ENCODE measurements at regions of chr10 and their contacts with region 1.

Region 1: GRCh38 chr10:110746254-110746826 is 102.2 kb downstream of the RBM20 start:
- DNase-seq: peak; percentile 70
- ATAC-seq: peak; percentile 68
- H3K4me3 ChIP-seq: no peak overlapping the region
- H3K4me3 Mint-ChIP-seq: no peak overlapping the region
- H3K27ac ChIP-seq: no peak overlapping the region
- H3K27ac Mint-ChIP-seq: no peak overlapping the region
- H3K4me1 ChIP-seq: peaks cover 0 to 6% of the 10 kb centered on the region in 2 donors
- H3K4me1 Mint-ChIP-seq: peaks cover 3% of the 10 kb centered on the region
- H3K27me3 ChIP-seq: peaks cover 0 to 5% (median 0%) of the 10 kb centered on the region in 4 experiments
- H3K27me3 Mint-ChIP-seq: peaks cover 5% of the 10 kb centered on the region
- CTCF ChIP-seq: peak; percentile 96

Region 2: DNA sequence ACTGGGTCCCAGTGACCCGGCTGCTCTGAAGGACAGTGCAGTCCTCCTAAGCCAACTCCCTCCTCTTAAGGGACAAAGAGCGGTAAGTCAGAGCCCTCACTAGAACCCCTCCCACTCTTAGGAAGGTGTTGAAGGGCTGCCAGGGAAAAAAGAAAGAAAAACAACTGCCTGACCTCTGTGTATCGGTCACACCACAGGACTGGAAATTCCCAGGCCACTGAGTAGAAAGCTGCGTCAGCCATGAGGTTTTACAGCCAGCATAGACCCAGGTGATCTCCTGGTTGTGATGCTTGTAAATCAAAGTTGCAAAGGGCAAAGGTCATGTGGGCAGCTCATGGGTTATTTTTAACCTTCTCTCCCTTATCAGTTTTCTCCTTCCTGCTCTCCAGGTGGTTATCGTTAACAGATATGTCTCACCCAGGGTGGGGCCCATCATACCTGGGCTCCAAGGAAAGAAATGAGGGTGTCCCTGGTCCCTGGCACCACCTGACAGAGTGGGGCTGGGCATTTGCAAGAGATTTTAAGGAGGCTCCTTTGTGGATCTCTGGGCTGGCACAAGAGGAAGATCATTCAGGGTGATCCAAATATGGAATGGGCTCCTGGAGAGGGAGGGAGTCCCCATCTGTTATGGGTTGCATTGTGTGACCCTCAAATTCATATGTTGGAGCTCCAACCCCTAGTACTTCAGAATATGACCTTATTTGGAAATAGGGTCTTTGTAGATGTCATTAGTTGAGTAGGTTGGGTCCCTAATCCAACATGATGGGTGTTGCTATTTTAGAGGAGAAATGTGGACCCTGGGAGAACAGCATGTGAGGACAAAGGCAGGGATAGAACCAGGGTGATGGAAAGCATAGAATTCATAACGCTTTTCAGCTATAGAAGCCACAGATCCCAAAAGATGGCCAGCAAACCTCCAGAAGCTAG is 350.4 kb before region 1 on chr10:
- CTCF ChIA-PET with region 1: no interaction called
- POLR2A ChIA-PET with region 1: no interaction called
- intact Hi-C with region 1: no loop called
- DNase-seq: peak; percentile 32
- ATAC-seq: peak; percentile 36
- H3K4me3 ChIP-seq: no peak overlapping the region
- H3K4me3 Mint-ChIP-seq: no peak overlapping the region
- H3K27ac ChIP-seq: no peak overlapping the region
- H3K27ac Mint-ChIP-seq: peak overlapping the region; percentile 39
- H3K4me1 ChIP-seq: no peaks in the 10 kb centered on the region
- H3K4me1 Mint-ChIP-seq: peaks cover 6% of the 10 kb centered on the region
- H3K27me3 ChIP-seq: peaks cover 0 to 8% (median 0%) of the 10 kb centered on the region in 4 experiments
- H3K27me3 Mint-ChIP-seq: peaks cover 20% of the 10 kb centered on the region
- CTCF ChIP-seq: no peak

Region 3: GRCh38 chr10:110820321-110820814 is 74.0 kb after region 1 on chr10:
- CTCF ChIA-PET with region 1: no interaction called
- POLR2A ChIA-PET with region 1: no interaction called
- intact Hi-C with region 1: no loop called
- DNase-seq: no peak
- ATAC-seq: no peak
- H3K4me3 ChIP-seq: no peak overlapping the region
- H3K4me3 Mint-ChIP-seq: no peak overlapping the region
- H3K27ac ChIP-seq: no peak overlapping the region
- H3K27ac Mint-ChIP-seq: no peak overlapping the region
- H3K4me1 ChIP-seq: peaks cover 19 to 24% of the 10 kb centered on the region in 2 donors
- H3K4me1 Mint-ChIP-seq: peaks cover 41% of the 10 kb centered on the region
- H3K27me3 ChIP-seq: no peaks in the 10 kb centered on the region
- H3K27me3 Mint-ChIP-seq: no peaks in the 10 kb centered on the region
- CTCF ChIP-seq: no peak

Region 4: GRCh38 chr10:110871298-110872084 is 125.2 kb after region 1 on chr10 and contains the start of gene PDCD4:
- CTCF ChIA-PET with region 1: interaction called, 9 read pairs
- POLR2A ChIA-PET with region 1: no interaction called
- intact Hi-C with region 1: loop called (anchors 1 kb)
- DNase-seq: peak; percentile 92
- ATAC-seq: peak; percentile 74
- H3K4me3 ChIP-seq: peak within 1 kb of the TSS; percentile 82 to 94 (median 85)
- H3K4me3 Mint-ChIP-seq: peak within 1 kb of the TSS; percentile 91
- H3K27ac ChIP-seq: peak within 1 kb of the TSS; percentile 89 to 94
- H3K27ac Mint-ChIP-seq: peak within 1 kb of the TSS; percentile 96
- H3K4me1 ChIP-seq: peaks cover 61% of the 10 kb centered on the region in 2 donors
- H3K4me1 Mint-ChIP-seq: peaks cover 60% of the 10 kb centered on the region
- H3K27me3 ChIP-seq: no peaks in the 10 kb centered on the region
- H3K27me3 Mint-ChIP-seq: no peaks in the 10 kb centered on the region
- CTCF ChIP-seq: no peak
- total RNA-seq, gene PDCD4: 169 and 185 TPM in 2 replicates

Region 5: DNA sequence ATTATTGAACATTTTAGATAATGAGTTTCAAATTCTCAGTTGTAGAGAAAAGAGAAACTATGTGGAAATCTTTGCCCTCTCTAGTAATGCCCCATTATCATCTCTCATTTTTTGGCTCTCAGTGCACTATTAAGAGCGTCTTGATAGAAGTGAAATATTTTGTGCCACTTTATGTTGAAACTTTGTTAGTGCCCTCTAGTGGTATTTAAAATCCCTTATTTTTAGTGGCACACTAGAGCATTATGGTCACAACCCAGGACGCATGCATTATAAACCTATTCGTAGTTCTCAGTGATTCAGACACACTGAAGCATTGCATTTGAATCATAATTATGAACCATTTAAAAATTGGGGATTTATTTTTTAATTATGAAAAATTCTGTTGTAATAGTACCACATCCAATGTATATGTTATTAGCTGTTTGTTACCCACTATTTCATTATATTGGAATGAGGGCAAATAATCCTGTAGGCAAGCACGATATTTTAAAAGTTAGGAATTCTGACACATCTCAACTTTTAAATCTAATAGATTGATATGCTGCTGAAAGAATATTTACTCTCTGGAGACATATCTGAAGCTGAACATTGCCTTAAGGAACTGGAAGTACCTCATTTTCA is 147.3 kb after region 1 on chr10:
- CTCF ChIA-PET with region 1: interaction called, 49 read pairs
- POLR2A ChIA-PET with region 1: interaction called, 3 read pairs
- intact Hi-C with region 1: loop called (anchors 1 kb)
- DNase-seq: peak; percentile 74
- ATAC-seq: peak; percentile 79
- H3K4me3 ChIP-seq: no peak overlapping the region
- H3K4me3 Mint-ChIP-seq: no peak overlapping the region
- H3K27ac ChIP-seq: peak overlapping the region in 1 of 2 donors; percentile 21
- H3K27ac Mint-ChIP-seq: no peak overlapping the region
- H3K4me1 ChIP-seq: peaks cover 0 to 7% of the 10 kb centered on the region in 2 donors
- H3K4me1 Mint-ChIP-seq: peaks cover 24% of the 10 kb centered on the region
- H3K27me3 ChIP-seq: no peaks in the 10 kb centered on the region
- H3K27me3 Mint-ChIP-seq: no peaks in the 10 kb centered on the region
- CTCF ChIP-seq: peak; percentile 79

Region 6: GRCh38 chr10:110901954-110902819 is 155.8 kb after region 1 on chr10:
- CTCF ChIA-PET with region 1: interaction called, 13 read pairs
- POLR2A ChIA-PET with region 1: no interaction called
- intact Hi-C with region 1: no loop called
- DNase-seq: no peak
- ATAC-seq: no peak
- H3K4me3 ChIP-seq: no peak overlapping the region
- H3K4me3 Mint-ChIP-seq: no peak overlapping the region
- H3K27ac ChIP-seq: no peak overlapping the region
- H3K27ac Mint-ChIP-seq: no peak overlapping the region
- H3K4me1 ChIP-seq: no peaks in the 10 kb centered on the region
- H3K4me1 Mint-ChIP-seq: peaks cover 5% of the 10 kb centered on the region
- H3K27me3 ChIP-seq: no peaks in the 10 kb centered on the region
- H3K27me3 Mint-ChIP-seq: no peaks in the 10 kb centered on the region
- CTCF ChIP-seq: no peak

Region 7: DNA sequence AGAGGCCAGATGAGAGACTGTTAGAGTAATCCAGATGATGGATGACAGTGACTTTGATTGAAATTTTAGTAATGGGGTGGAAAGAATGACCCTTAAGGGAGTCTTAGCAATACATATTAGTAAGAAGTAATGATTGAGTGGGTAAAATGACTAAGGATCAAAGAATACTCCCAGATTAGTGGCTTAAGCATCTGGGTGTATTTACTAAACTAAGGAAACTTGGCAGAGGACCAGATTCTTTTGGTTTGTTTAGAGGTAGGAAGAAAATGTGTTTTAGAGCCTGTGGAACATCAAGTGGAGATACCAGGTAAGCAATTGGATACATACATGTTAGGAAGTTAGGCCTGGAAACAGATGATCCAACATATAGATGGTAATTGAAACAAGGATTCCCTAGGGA is 271.7 kb after region 1 on chr10:
- CTCF ChIA-PET with region 1: no interaction called
- POLR2A ChIA-PET with region 1: no interaction called
- intact Hi-C with region 1: loop called (anchors 5 kb)
- DNase-seq: no peak
- ATAC-seq: no peak
- H3K4me3 ChIP-seq: no peak overlapping the region
- H3K4me3 Mint-ChIP-seq: no peak overlapping the region
- H3K27ac ChIP-seq: no peak overlapping the region
- H3K27ac Mint-ChIP-seq: no peak overlapping the region
- H3K4me1 ChIP-seq: no peaks in the 10 kb centered on the region
- H3K4me1 Mint-ChIP-seq: no peaks in the 10 kb centered on the region
- H3K27me3 ChIP-seq: no peaks in the 10 kb centered on the region
- H3K27me3 Mint-ChIP-seq: no peaks in the 10 kb centered on the region
- CTCF ChIP-seq: no peak

Region 8: GRCh38 chr10:111207500-111207899 is 461.2 kb after region 1 on chr10:
- CTCF ChIA-PET with region 1: no interaction called
- POLR2A ChIA-PET with region 1: no interaction called
- intact Hi-C with region 1: loop called (anchors 5 kb)
- DNase-seq: peak; percentile 8
- ATAC-seq: no peak
- H3K4me3 ChIP-seq: no peak overlapping the region
- H3K4me3 Mint-ChIP-seq: no peak overlapping the region
- H3K27ac ChIP-seq: no peak overlapping the region
- H3K27ac Mint-ChIP-seq: no peak overlapping the region
- H3K4me1 ChIP-seq: no peaks in the 10 kb centered on the region
- H3K4me1 Mint-ChIP-seq: no peaks in the 10 kb centered on the region
- H3K27me3 ChIP-seq: peaks cover 0 to 7% (median 1%) of the 10 kb centered on the region in 4 experiments
- H3K27me3 Mint-ChIP-seq: peaks cover 10% of the 10 kb centered on the region
- CTCF ChIP-seq: no peak

Region 9: DNA sequence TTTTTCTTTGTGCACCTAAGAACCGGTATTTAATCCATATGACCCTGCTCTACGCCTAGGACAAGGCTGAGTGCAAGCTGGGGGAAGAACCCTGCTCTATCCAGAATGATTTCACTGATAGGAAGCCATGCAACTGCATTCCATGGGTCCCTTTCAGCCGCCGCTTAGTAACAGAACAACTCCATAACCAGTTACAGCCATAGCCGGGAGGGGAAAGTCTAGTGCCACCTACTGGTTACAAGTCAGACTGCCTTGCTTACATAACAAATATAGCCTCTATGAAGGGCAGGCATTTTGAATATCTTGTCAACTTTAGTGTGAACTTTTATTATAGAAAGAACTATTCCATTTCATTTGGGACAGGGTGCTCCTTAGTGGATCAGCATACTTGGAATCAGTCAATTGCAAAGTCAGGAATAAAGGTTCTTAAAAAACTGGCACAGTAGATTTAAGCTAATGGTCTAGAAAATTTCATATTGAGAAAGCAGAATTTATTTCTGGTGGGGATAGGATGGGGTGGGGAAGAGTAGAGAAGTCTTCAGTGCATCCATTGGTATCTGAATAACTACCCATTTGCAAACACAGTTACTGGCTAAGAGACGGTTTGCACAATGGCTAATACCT is 852.2 kb after region 1 on chr10:
- CTCF ChIA-PET with region 1: interaction called, 18 read pairs
- POLR2A ChIA-PET with region 1: no interaction called
- intact Hi-C with region 1: no loop called
- DNase-seq: peak; percentile 55
- ATAC-seq: peak; percentile 47
- H3K4me3 ChIP-seq: no peak overlapping the region
- H3K4me3 Mint-ChIP-seq: no peak overlapping the region
- H3K27ac ChIP-seq: no peak overlapping the region
- H3K27ac Mint-ChIP-seq: no peak overlapping the region
- H3K4me1 ChIP-seq: no peaks in the 10 kb centered on the region
- H3K4me1 Mint-ChIP-seq: no peaks in the 10 kb centered on the region
- H3K27me3 ChIP-seq: no peaks in the 10 kb centered on the region
- H3K27me3 Mint-ChIP-seq: peaks cover 15% of the 10 kb centered on the region
- CTCF ChIP-seq: peak; percentile 78